CD4-positive, alpha-beta T cell (primary cell): ENCODE measurements at regions of chr5 and their contacts with region 1.

Region 1: GRCh38 chr5:54867310-54867944 is 118.0 kb downstream of the ESM1 start:
- DNase-seq: peak in 3 of 14 experiments; percentile 72 to 74 (median 73)
- ATAC-seq: peak; percentile 74
- H3K4me3 ChIP-seq: no peak overlapping the region
- H3K4me3 Mint-ChIP-seq: peak overlapping the region; percentile 6
- H3K27ac ChIP-seq: no peak overlapping the region
- H3K27ac Mint-ChIP-seq: no peak overlapping the region
- H3K4me1 ChIP-seq: peaks cover 4% of the 10 kb centered on the region
- H3K4me1 Mint-ChIP-seq: peaks cover 10% of the 10 kb centered on the region
- H3K27me3 ChIP-seq: no peaks in the 10 kb centered on the region
- H3K27me3 Mint-ChIP-seq: peaks cover 46% of the 10 kb centered on the region
- CTCF ChIP-seq: peak; percentile 86

Region 2: DNA sequence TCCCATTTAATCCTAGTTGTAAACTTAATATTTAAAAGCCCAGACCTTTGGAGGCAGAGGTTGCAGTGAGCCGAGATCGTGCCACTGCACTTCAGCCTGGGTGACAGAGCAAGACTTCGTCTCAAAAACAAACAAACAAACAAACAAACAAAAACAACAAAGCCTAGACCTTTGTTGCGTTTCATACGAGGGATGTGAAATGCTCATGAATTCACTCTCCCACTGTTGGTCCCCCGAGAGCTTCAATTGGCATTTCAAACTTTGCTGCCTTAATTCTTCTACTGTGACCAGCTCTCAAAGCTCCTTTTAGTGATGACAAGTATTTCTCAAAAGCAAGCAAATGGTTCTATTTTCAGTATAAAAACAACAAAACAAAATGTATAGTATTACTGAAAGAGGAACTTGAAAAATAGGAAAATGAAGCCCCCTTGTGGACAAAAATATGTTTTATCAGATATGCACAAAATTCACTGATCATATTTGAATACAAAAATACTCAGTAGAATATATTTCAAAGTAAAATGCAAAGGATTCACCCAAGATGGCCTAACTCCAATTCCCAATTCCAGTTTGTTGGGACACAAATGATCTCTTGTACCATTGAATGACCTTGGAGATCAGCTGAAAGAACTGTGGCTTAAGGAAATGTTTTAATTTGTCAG is 22.4 kb before region 1 on chr5:
- CTCF ChIA-PET with region 1: interaction called, 13 read pairs
- POLR2A ChIA-PET with region 1: no interaction called
- intact Hi-C with region 1: no loop called
- DNase-seq: peak in 3 of 14 experiments; percentile 62 to 73 (median 71)
- ATAC-seq: no peak
- H3K4me3 ChIP-seq: peak overlapping the region; percentile 3
- H3K4me3 Mint-ChIP-seq: peak overlapping the region; percentile 60
- H3K27ac ChIP-seq: no peak overlapping the region
- H3K27ac Mint-ChIP-seq: no peak overlapping the region
- H3K4me1 ChIP-seq: peaks cover 2% of the 10 kb centered on the region
- H3K4me1 Mint-ChIP-seq: no peaks in the 10 kb centered on the region
- H3K27me3 ChIP-seq: peaks cover 3 to 4% of the 10 kb centered on the region in 2 experiments
- H3K27me3 Mint-ChIP-seq: peaks cover 16% of the 10 kb centered on the region
- CTCF ChIP-seq: peak; percentile 77

Region 3: DNA sequence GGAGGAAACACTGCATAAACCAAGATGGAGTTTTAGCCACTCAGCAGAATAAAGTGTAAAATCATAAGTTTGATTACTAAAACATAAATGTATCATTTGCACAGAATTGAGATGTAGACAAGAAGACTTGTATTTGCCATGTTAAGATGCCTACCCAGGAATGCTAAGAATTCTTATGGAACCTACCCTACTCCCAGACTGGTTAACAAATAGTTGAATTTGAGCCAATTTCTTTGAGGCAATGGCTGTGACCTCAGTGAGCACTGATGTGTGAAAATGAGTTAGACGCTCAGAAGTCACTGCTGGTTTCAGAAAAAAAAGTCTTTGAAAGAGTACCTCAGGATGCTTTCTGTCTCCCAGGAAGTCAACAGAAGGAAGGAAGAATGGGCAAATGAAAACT is 22.4 kb after region 1 on chr5:
- CTCF ChIA-PET with region 1: no interaction called
- POLR2A ChIA-PET with region 1: no interaction called
- intact Hi-C with region 1: no loop called
- DNase-seq: no peak
- ATAC-seq: no peak
- H3K4me3 ChIP-seq: no peak overlapping the region
- H3K4me3 Mint-ChIP-seq: no peak overlapping the region
- H3K27ac ChIP-seq: no peak overlapping the region
- H3K27ac Mint-ChIP-seq: no peak overlapping the region
- H3K4me1 ChIP-seq: no peaks in the 10 kb centered on the region
- H3K4me1 Mint-ChIP-seq: no peaks in the 10 kb centered on the region
- H3K27me3 ChIP-seq: peaks cover 15 to 39% of the 10 kb centered on the region in 2 experiments
- H3K27me3 Mint-ChIP-seq: peaks cover 77% of the 10 kb centered on the region
- CTCF ChIP-seq: no peak